GM13976 (cell line): ENCODE measurements at regions of chr7 and their contacts with region 1.

Region 1: GRCh38 chr7:7424151-7424873 is 111.4 kb downstream of the COL28A1 start:
- DNase-seq: peak; percentile 55
- CTCF ChIP-seq: peak; percentile 67

Region 2: DNA sequence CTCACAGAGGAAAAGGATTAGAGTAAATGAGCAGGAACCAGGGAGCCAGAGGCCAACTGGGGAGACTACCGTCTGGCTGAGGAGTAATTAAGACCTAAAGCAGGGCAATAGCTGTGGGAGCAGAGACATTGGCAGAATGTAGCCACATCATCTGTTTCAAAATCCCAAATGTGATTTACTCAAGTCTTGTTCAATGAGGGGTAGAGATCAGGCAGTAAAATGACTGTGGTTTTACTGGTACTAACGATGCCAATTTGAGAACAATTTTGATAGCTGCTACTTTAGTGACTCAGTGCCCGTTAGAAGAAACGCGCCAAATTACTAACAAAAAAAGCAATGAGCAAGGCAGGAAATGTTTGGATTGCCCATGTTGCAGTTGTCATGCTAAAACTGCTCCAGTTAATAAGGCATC is 129.7 kb after region 1 on chr7:
- in situ Hi-C with region 1: loop called (anchors 10 kb)
- DNase-seq: no peak
- CTCF ChIP-seq: no peak